Caco-2 (cell line): ENCODE measurements at regions of chr5 and their contacts with region 1.

Region 1: DNA sequence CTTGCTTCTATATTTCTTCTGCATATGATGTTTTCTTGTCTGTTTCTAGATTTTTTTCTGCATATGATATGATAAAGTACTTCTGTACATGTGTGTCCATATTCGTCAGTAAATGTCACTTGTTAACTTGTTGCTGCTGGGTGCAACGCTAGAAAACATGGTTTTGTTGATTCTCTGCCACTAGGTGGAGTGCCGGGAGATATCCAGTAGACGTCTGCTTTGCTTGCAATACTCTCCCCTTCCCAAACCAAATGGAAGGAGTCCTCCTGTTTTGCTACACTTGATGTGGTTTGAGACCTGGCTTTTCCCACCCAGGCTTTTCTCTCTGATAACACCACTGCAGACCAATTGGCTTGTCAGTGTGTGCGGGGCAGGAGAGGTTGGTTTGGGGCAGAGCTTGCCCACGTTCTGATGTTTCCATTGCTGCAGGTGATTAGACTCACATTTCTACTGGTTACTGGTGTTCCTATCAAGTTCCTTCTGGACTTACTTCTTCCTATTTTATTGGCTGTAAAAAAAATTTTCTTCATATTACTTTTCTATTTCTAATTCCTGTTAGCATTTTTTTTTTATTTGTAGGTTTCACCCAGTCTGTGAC is 900.0 kb upstream of the CDH10 start:
- DNase-seq: peak; percentile 47 to 63
- H3K4me3 ChIP-seq: no peak overlapping the region
- H3K4me3 Mint-ChIP-seq: no peak overlapping the region
- H3K27ac Mint-ChIP-seq: no peak overlapping the region
- H3K4me1 ChIP-seq: no peaks in the 10 kb centered on the region
- H3K4me1 Mint-ChIP-seq: peaks cover 6% of the 10 kb centered on the region
- H3K27me3 ChIP-seq: no peaks in the 10 kb centered on the region
- H3K27me3 Mint-ChIP-seq: peaks cover 2% of the 10 kb centered on the region
- CTCF ChIP-seq: peak; percentile 64 to 70

Region 2: DNA sequence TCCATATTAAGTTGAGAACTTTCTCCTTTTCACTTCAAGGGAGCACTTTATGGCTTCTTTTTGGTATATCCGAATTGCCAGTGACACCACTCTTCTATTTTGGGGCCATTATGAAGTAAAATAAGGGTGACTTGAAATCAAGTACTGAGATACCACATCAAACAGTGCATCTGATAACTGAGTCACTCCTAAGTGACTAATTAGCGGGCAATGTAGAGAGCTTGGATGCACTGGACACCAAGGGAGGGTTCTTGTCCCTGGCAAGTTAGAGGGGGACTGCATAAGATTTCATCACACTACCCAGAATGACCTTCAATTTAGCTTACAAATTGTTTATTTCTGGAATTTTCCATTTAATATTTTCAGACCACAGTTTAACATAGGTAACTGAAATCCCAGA is 86.1 kb before region 1 on chr5:
- CTCF ChIA-PET with region 1: no interaction called
- POLR2A ChIA-PET with region 1: no interaction called
- intact Hi-C with region 1: no loop called
- DNase-seq: no peak
- H3K4me3 ChIP-seq: no peak overlapping the region
- H3K4me3 Mint-ChIP-seq: no peak overlapping the region
- H3K27ac Mint-ChIP-seq: no peak overlapping the region
- H3K4me1 ChIP-seq: no peaks in the 10 kb centered on the region
- H3K4me1 Mint-ChIP-seq: no peaks in the 10 kb centered on the region
- H3K27me3 ChIP-seq: no peaks in the 10 kb centered on the region
- H3K27me3 Mint-ChIP-seq: peaks cover 2% of the 10 kb centered on the region
- CTCF ChIP-seq: no peak

Region 3: GRCh38 chr5:25568979-25569625 is 24.4 kb after region 1 on chr5:
- CTCF ChIA-PET with region 1: no interaction called
- POLR2A ChIA-PET with region 1: no interaction called
- intact Hi-C with region 1: no loop called
- DNase-seq: no peak
- H3K4me3 ChIP-seq: no peak overlapping the region
- H3K4me3 Mint-ChIP-seq: no peak overlapping the region
- H3K27ac Mint-ChIP-seq: no peak overlapping the region
- H3K4me1 ChIP-seq: no peaks in the 10 kb centered on the region
- H3K4me1 Mint-ChIP-seq: no peaks in the 10 kb centered on the region
- H3K27me3 ChIP-seq: no peaks in the 10 kb centered on the region
- H3K27me3 Mint-ChIP-seq: no peaks in the 10 kb centered on the region
- CTCF ChIP-seq: no peak

Region 4: GRCh38 chr5:25579111-25579510 is 34.4 kb after region 1 on chr5:
- CTCF ChIA-PET with region 1: no interaction called
- POLR2A ChIA-PET with region 1: no interaction called
- intact Hi-C with region 1: no loop called
- DNase-seq: no peak
- H3K4me3 ChIP-seq: no peak overlapping the region
- H3K4me3 Mint-ChIP-seq: no peak overlapping the region
- H3K27ac Mint-ChIP-seq: no peak overlapping the region
- H3K4me1 ChIP-seq: 0 out of 2 replicates have a peak, but pooled peaks cover 4% of the 10 kb centered on the region
- H3K4me1 Mint-ChIP-seq: no peaks in the 10 kb centered on the region
- H3K27me3 ChIP-seq: no peaks in the 10 kb centered on the region
- H3K27me3 Mint-ChIP-seq: no peaks in the 10 kb centered on the region
- CTCF ChIP-seq: no peak

Region 5: DNA sequence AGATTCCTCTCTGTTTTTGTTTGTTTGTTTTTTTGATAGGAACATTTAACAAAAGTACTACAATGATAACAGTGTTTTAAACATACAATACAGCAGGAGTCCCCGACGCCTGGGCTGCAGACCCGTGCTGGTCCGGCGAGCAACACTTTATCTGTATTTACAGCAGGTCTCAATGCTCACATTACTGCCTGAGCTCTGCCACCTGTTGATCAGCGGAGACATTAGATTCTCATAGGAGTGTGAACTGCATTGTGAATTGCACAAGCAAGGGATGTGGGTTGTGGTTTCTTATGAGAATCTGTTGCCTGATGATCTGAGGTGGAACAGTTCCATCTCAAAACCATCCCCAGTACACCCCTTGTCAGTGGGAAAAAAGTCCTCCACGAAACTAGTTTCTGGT is 168.5 kb after region 1 on chr5:
- CTCF ChIA-PET with region 1: no interaction called
- POLR2A ChIA-PET with region 1: no interaction called
- intact Hi-C with region 1: loop called (anchors 2 kb)
- DNase-seq: peak in 1 of 2 experiments; percentile 10
- H3K4me3 ChIP-seq: no peak overlapping the region
- H3K4me3 Mint-ChIP-seq: no peak overlapping the region
- H3K27ac Mint-ChIP-seq: no peak overlapping the region
- H3K4me1 ChIP-seq: no peaks in the 10 kb centered on the region
- H3K4me1 Mint-ChIP-seq: no peaks in the 10 kb centered on the region
- H3K27me3 ChIP-seq: no peaks in the 10 kb centered on the region
- H3K27me3 Mint-ChIP-seq: no peaks in the 10 kb centered on the region
- CTCF ChIP-seq: no peak

Region 6: GRCh38 chr5:26482810-26483375 is 938.1 kb after region 1 on chr5:
- CTCF ChIA-PET with region 1: no interaction called
- POLR2A ChIA-PET with region 1: no interaction called
- intact Hi-C with region 1: loop called (anchors 2 kb)
- DNase-seq: peak; percentile 39 to 49
- H3K4me3 ChIP-seq: no peak overlapping the region
- H3K4me3 Mint-ChIP-seq: no peak overlapping the region
- H3K27ac Mint-ChIP-seq: no peak overlapping the region
- H3K4me1 ChIP-seq: no peaks in the 10 kb centered on the region
- H3K4me1 Mint-ChIP-seq: no peaks in the 10 kb centered on the region
- H3K27me3 ChIP-seq: no peaks in the 10 kb centered on the region
- H3K27me3 Mint-ChIP-seq: no peaks in the 10 kb centered on the region
- CTCF ChIP-seq: peak; percentile 63 to 65

Region 7: GRCh38 chr5:26700759-26701384 is 1156.1 kb after region 1 on chr5:
- CTCF ChIA-PET with region 1: no interaction called
- POLR2A ChIA-PET with region 1: no interaction called
- intact Hi-C with region 1: loop called (anchors 2 kb)
- DNase-seq: peak; percentile 46 to 55
- H3K4me3 ChIP-seq: no peak overlapping the region
- H3K4me3 Mint-ChIP-seq: no peak overlapping the region
- H3K27ac Mint-ChIP-seq: no peak overlapping the region
- H3K4me1 ChIP-seq: no peaks in the 10 kb centered on the region
- H3K4me1 Mint-ChIP-seq: no peaks in the 10 kb centered on the region
- H3K27me3 ChIP-seq: no peaks in the 10 kb centered on the region
- H3K27me3 Mint-ChIP-seq: peaks cover 3% of the 10 kb centered on the region
- CTCF ChIP-seq: peak; percentile 62 to 64